Endothelial cell of umbilical vein (primary cell): ENCODE measurements at regions of chr6 and their contacts with region 1.

Region 1: GRCh38 chr6:96897383-96898240 is at the start of gene NDUFAF4:
- DNase-seq: peak; percentile 96
- H3K4me3 ChIP-seq: peak within 1 kb of the TSS; percentile 79 to 99 (median 91)
- H3K27ac ChIP-seq: peak within 1 kb of the TSS; percentile 95
- H3K4me1 ChIP-seq: peaks cover 25% of the 10 kb centered on the region
- H3K27me3 ChIP-seq: peaks cover 0 to 2% of the 10 kb centered on the region in 2 experiments
- CTCF ChIP-seq: peak; percentile 94 to 97
- POLR2A ChIP-seq: no peak
- total RNA-seq, gene NDUFAF4: 39.8 and 44.6 TPM in 2 replicates

Region 2: GRCh38 chr6:95364016-95364604 is 1533.5 kb before region 1 on chr6:
- CTCF ChIA-PET with region 1: no interaction called
- POLR2A ChIA-PET with region 1: no interaction called
- dilution Hi-C with region 1: no loop called
- intact Hi-C with region 1: loop called (anchors 5 kb)
- DNase-seq: no peak
- H3K4me3 ChIP-seq: no peak overlapping the region
- H3K27ac ChIP-seq: no peak overlapping the region
- H3K4me1 ChIP-seq: no peaks in the 10 kb centered on the region
- H3K27me3 ChIP-seq: no peaks in the 10 kb centered on the region
- CTCF ChIP-seq: peak in 1 of 2 donors; percentile 9
- POLR2A ChIP-seq: no peak

Region 3: GRCh38 chr6:96626759-96627364 is 270.8 kb before region 1 on chr6:
- CTCF ChIA-PET with region 1: interaction called, 14 read pairs
- POLR2A ChIA-PET with region 1: no interaction called
- dilution Hi-C with region 1: no loop called
- intact Hi-C with region 1: loop called (anchors 1 kb)
- DNase-seq: peak; percentile 17
- H3K4me3 ChIP-seq: no peak overlapping the region
- H3K27ac ChIP-seq: no peak overlapping the region
- H3K4me1 ChIP-seq: no peaks in the 10 kb centered on the region
- H3K27me3 ChIP-seq: no peaks in the 10 kb centered on the region
- CTCF ChIP-seq: peak in 1 of 2 donors; percentile 6
- POLR2A ChIP-seq: no peak

Region 4: DNA sequence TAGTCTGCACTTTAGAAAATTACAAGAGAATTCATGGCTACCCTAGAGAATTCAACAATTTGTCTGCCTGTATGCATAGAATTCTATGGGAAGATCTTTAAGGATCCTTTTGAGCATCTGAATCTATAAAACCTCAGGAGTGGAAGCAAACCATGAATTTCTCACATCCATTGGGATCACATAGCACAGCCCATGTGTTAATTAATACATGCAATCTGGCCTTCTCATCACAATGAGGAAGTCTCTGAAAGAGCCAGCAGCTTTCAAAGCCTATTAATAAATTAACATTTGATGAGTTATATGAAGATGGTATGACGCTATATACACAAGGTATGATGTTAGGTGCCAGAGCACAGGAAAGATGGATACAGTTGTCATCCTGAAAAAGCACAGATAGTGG is 24.6 kb before region 1 on chr6:
- CTCF ChIA-PET with region 1: no interaction called
- POLR2A ChIA-PET with region 1: no interaction called
- dilution Hi-C with region 1: no loop called
- intact Hi-C with region 1: no loop called
- DNase-seq: no peak
- H3K4me3 ChIP-seq: no peak overlapping the region
- H3K27ac ChIP-seq: no peak overlapping the region
- H3K4me1 ChIP-seq: no peaks in the 10 kb centered on the region
- H3K27me3 ChIP-seq: no peaks in the 10 kb centered on the region
- CTCF ChIP-seq: no peak
- POLR2A ChIP-seq: no peak

Region 5: GRCh38 chr6:96939007-96939805 is 41.6 kb after region 1 on chr6:
- CTCF ChIA-PET with region 1: interaction called, 12 read pairs
- POLR2A ChIA-PET with region 1: no interaction called
- dilution Hi-C with region 1: no loop called
- intact Hi-C with region 1: loop called (anchors 1 kb)
- DNase-seq: peak; percentile 73
- H3K4me3 ChIP-seq: no peak overlapping the region
- H3K27ac ChIP-seq: no peak overlapping the region
- H3K4me1 ChIP-seq: peaks cover 14% of the 10 kb centered on the region
- H3K27me3 ChIP-seq: peaks cover 5% of the 10 kb centered on the region in 2 experiments
- CTCF ChIP-seq: no peak
- POLR2A ChIP-seq: no peak

Region 6: GRCh38 chr6:97068211-97068610 is 170.6 kb after region 1 on chr6:
- CTCF ChIA-PET with region 1: interaction called, 29 read pairs
- POLR2A ChIA-PET with region 1: no interaction called
- dilution Hi-C with region 1: no loop called
- intact Hi-C with region 1: no loop called
- DNase-seq: peak; percentile 47
- H3K4me3 ChIP-seq: no peak overlapping the region
- H3K27ac ChIP-seq: no peak overlapping the region
- H3K4me1 ChIP-seq: no peaks in the 10 kb centered on the region
- H3K27me3 ChIP-seq: peaks cover 8 to 25% of the 10 kb centered on the region in 2 experiments
- CTCF ChIP-seq: peak; percentile 14 to 19
- POLR2A ChIP-seq: no peak

Region 7: GRCh38 chr6:97394160-97394748 is 496.6 kb after region 1 on chr6:
- CTCF ChIA-PET with region 1: no interaction called
- POLR2A ChIA-PET with region 1: no interaction called
- dilution Hi-C with region 1: no loop called
- intact Hi-C with region 1: loop called (anchors 5 kb)
- DNase-seq: peak; percentile 75
- H3K4me3 ChIP-seq: no peak overlapping the region
- H3K27ac ChIP-seq: no peak overlapping the region
- H3K4me1 ChIP-seq: no peaks in the 10 kb centered on the region
- H3K27me3 ChIP-seq: peaks cover 4 to 5% of the 10 kb centered on the region in 2 experiments
- CTCF ChIP-seq: peak; percentile 71 to 73
- POLR2A ChIP-seq: no peak